ENCODE measurements at regions of chr1 and their contacts with region 1.

Region 1: GRCh38 chr1:55284852-55285251 is 69.7 kb upstream of the USP24 start:
- DNase-seq: peak in 1 of 9 donors; percentile 8
- ATAC-seq: no peak
- H3K4me3 ChIP-seq: no peak overlapping the region
- H3K4me3 Mint-ChIP-seq: no peak overlapping the region
- H3K27ac ChIP-seq: no peak overlapping the region
- H3K27ac Mint-ChIP-seq: no peak overlapping the region
- H3K4me1 ChIP-seq: no peaks in the 10 kb centered on the region
- H3K4me1 Mint-ChIP-seq: no peaks in the 10 kb centered on the region
- H3K27me3 ChIP-seq: no peaks in the 10 kb centered on the region
- H3K27me3 Mint-ChIP-seq: peaks cover 0 to 14% (median 0%) of the 10 kb centered on the region in 5 donors

Region 2: GRCh38 chr1:55813618-55814017 is 528.8 kb after region 1 on chr1:
- CTCF ChIA-PET with region 1: no interaction called
- POLR2A ChIA-PET with region 1: no interaction called
- intact Hi-C with region 1: no loop called
- DNase-seq: no peak
- ATAC-seq: no peak
- H3K4me3 ChIP-seq: no peak overlapping the region
- H3K4me3 Mint-ChIP-seq: no peak overlapping the region
- H3K27ac ChIP-seq: no peak overlapping the region
- H3K27ac Mint-ChIP-seq: no peak overlapping the region
- H3K4me1 ChIP-seq: no peaks in the 10 kb centered on the region
- H3K4me1 Mint-ChIP-seq: peaks cover 0 to 6% (median 0%) of the 10 kb centered on the region in 7 donors
- H3K27me3 ChIP-seq: no peaks in the 10 kb centered on the region
- H3K27me3 Mint-ChIP-seq: peaks cover 0 to 8% (median 0%) of the 10 kb centered on the region in 5 donors

Region 3: GRCh38 chr1:55893155-55893554 is 608.3 kb after region 1 on chr1:
- CTCF ChIA-PET with region 1: no interaction called
- POLR2A ChIA-PET with region 1: no interaction called
- intact Hi-C with region 1: loop called in 1 of 2 experiments (anchors 5 kb)
- DNase-seq: no peak
- ATAC-seq: no peak
- H3K4me3 ChIP-seq: no peak overlapping the region
- H3K4me3 Mint-ChIP-seq: no peak overlapping the region
- H3K27ac ChIP-seq: no peak overlapping the region
- H3K27ac Mint-ChIP-seq: no peak overlapping the region
- H3K4me1 ChIP-seq: no peaks in the 10 kb centered on the region
- H3K4me1 Mint-ChIP-seq: no peaks in the 10 kb centered on the region
- H3K27me3 ChIP-seq: no peaks in the 10 kb centered on the region
- H3K27me3 Mint-ChIP-seq: peaks cover 0 to 19% (median 0%) of the 10 kb centered on the region in 5 donors

Region 4: GRCh38 chr1:56821140-56821797 is 1536.4 kb after region 1 on chr1:
- CTCF ChIA-PET with region 1: no interaction called
- POLR2A ChIA-PET with region 1: no interaction called
- intact Hi-C with region 1: loop called in 1 of 2 experiments (anchors 5 kb)
- DNase-seq: peak in 7 of 9 donors; percentile 2 to 79 (median 32)
- ATAC-seq: peak; percentile 74
- H3K4me3 ChIP-seq: no peak overlapping the region
- H3K4me3 Mint-ChIP-seq: no peak overlapping the region
- H3K27ac ChIP-seq: no peak overlapping the region
- H3K27ac Mint-ChIP-seq: no peak overlapping the region
- H3K4me1 ChIP-seq: no peaks in the 10 kb centered on the region
- H3K4me1 Mint-ChIP-seq: no peaks in the 10 kb centered on the region
- H3K27me3 ChIP-seq: no peaks in the 10 kb centered on the region
- H3K27me3 Mint-ChIP-seq: peaks cover 0 to 50% (median 20%) of the 10 kb centered on the region in 5 donors